Activated CD4-positive, alpha-beta T cell treated with anti-CD3 and anti-CD28 coated beads for 36 hours (primary cell): ENCODE measurements at regions of chr10 and their contacts with region 1.

Region 1: DNA sequence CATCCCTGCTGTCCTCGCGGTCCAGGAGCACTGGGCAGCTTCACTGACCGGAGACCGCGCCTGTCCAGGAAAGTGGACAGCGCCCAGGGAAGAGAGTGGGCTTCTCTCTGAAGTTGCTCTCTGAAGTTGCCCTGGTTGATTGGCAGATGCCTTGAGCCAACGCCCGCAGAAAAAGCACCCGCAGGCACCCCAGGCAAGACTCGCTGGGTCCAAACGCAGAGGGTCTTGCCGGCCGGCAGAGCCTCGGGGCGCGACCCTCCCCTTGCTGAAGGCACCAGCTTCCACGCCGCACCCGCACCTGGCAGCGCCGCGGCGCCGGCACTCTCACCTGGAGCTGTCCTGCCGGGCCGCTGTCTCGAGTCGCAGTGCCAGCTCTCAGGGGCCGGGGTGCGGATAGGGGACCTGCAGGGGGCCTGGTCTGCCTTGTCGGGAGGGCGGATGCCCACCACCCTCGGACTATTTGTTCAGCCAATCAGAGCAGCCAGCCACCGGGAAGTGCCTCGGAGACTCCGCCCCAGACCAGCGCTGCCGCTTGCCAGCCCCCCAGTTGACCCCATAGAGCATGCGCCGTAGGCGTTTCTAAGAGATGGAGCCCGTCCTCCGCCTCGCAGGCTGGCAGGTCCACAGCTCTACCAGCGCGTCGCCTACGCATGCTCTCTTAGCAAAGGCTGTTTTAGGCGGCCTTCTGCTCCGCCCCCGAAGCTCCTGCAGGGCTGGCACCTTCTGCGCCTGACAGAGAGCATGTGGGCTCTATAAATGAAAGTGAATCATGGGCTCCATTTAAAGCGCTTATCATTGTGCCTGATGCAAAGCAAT is at the start of gene LIPA:
- DNase-seq: peak; percentile 96
- ATAC-seq: peak; percentile 96
- H3K4me3 Mint-ChIP-seq: peak within 1 kb of the TSS; percentile 80
- H3K27ac Mint-ChIP-seq: peak within 1 kb of the TSS; percentile 74
- H3K4me1 Mint-ChIP-seq: peaks cover 47% of the 10 kb centered on the region
- H3K27me3 Mint-ChIP-seq: peaks cover 2% of the 10 kb centered on the region
- total RNA-seq, gene LIPA: 17.0 to 22.1 TPM

Region 2: GRCh38 chr10:89217057-89217990 is 34.3 kb before region 1 on chr10:
- CTCF ChIA-PET with region 1: interaction called, 12 read pairs
- POLR2A ChIA-PET with region 1: no interaction called
- intact Hi-C with region 1: no loop called
- DNase-seq: peak; percentile 76
- ATAC-seq: peak; percentile 55
- H3K4me3 Mint-ChIP-seq: no peak overlapping the region
- H3K27ac Mint-ChIP-seq: no peak overlapping the region
- H3K4me1 Mint-ChIP-seq: peaks cover 9% of the 10 kb centered on the region
- H3K27me3 Mint-ChIP-seq: no peaks in the 10 kb centered on the region

Region 3: GRCh38 chr10:89391917-89392756 is 140.5 kb after region 1 on chr10 and contains the start of gene IFIT1:
- CTCF ChIA-PET with region 1: interaction called, 3 read pairs
- POLR2A ChIA-PET with region 1: no interaction called
- intact Hi-C with region 1: loop called in 1 of 2 experiments (anchors 1 kb)
- DNase-seq: peak; percentile 53
- ATAC-seq: peak; percentile 87
- H3K4me3 Mint-ChIP-seq: peak within 1 kb of the TSS; percentile 72
- H3K27ac Mint-ChIP-seq: peak within 1 kb of the TSS; percentile 79
- H3K4me1 Mint-ChIP-seq: peaks cover 27% of the 10 kb centered on the region
- H3K27me3 Mint-ChIP-seq: no peaks in the 10 kb centered on the region
- total RNA-seq, gene IFIT1: 5.9 to 6.5 TPM

Region 4: GRCh38 chr10:89643431-89644331 is 392.1 kb after region 1 on chr10:
- CTCF ChIA-PET with region 1: no interaction called
- POLR2A ChIA-PET with region 1: interaction called, 3 read pairs
- intact Hi-C with region 1: loop called in 1 of 2 experiments (anchors 2 kb)
- DNase-seq: peak; percentile 79
- ATAC-seq: peak; percentile 87
- H3K4me3 Mint-ChIP-seq: no peak overlapping the region
- H3K27ac Mint-ChIP-seq: no peak overlapping the region
- H3K4me1 Mint-ChIP-seq: peaks cover 6% of the 10 kb centered on the region
- H3K27me3 Mint-ChIP-seq: peaks cover 6% of the 10 kb centered on the region

Region 5: DNA sequence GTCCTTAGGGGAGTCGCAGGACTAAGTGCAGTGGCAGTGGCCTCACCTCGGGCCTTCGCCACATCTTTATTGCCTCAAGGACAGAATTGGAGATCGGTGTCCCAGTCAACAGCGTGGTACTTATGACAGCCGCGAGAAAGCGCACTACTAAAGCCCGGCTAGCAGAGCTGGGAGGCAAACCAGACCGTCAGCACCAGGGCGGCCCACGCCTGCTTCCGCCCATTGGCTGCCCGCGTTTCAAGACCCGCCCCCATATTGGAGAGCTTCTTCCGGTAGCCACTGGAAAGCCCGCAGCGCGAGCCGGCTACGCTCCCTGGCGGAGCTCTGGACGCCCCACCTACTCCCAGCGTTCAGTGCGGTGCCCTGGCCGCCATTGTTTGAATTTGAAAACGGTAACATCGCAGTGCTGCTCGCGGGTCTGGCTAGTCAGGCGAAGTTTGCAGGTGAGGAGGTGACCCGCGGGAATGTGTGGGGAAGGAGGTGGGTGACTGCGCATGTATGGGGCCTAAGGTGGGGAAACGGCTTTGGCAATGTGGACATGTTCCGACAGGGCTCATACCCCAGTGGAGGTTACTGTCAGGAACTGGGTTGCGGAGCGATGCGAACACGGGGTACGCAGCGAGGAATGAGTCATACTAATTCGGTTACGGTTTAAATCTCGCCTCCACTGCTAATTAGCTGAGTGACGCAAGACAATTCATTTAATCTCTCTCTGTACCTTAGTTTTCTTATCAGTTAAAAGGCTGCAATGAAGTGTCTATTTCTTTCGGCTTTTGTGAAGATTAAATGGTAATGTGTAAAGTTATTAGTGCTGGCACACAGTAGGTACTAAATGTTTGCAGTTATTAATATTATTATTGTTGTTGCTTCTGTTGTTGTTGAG is 449.9 kb after region 1 on chr10 and contains the start of gene KIF20B:
- CTCF ChIA-PET with region 1: no interaction called
- POLR2A ChIA-PET with region 1: no interaction called
- intact Hi-C with region 1: loop called in 1 of 2 experiments (anchors 10 kb)
- DNase-seq: peak; percentile 97
- ATAC-seq: peak; percentile 97
- H3K4me3 Mint-ChIP-seq: peak within 1 kb of the TSS; percentile 99
- H3K27ac Mint-ChIP-seq: peak within 1 kb of the TSS; percentile 98
- H3K4me1 Mint-ChIP-seq: peaks cover 41% of the 10 kb centered on the region
- H3K27me3 Mint-ChIP-seq: no peaks in the 10 kb centered on the region
- total RNA-seq, gene KIF20B: 74.6 to 86.2 TPM